H1 (cell line): ENCODE measurements at regions of chr18 and their contacts with region 1.

Region 1: DNA sequence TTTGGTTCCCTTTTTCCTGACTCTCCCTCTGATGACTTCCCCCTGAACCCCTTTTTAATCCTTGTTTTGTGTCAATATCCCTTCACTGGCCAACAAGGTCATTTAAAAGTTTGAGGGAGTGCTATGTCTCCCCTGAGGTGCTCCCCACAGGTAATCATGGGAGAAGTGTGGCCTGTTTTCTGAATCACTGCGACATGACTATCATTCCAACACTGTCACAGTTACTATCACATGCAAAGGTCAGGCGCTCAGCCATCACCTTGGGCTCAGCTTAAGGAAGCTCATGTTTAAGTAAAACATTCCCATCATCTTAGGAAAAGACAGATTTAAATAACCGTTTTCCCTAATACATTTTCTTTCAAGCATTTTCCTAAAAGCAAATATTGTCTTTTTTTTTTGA is 20.9 kb upstream of the ACAA2 start:
- DNase-seq: no peak
- H3K4me3 ChIP-seq: no peak overlapping the region
- H3K27ac ChIP-seq: no peak overlapping the region
- H3K4me1 ChIP-seq: no peaks in the 10 kb centered on the region
- H3K27me3 ChIP-seq: no peaks in the 10 kb centered on the region
- CTCF ChIP-seq: no peak
- EP300 ChIP-seq: no peak
- POLR2A ChIP-seq: no peak
- RAD21 ChIP-seq: no peak

Region 2: DNA sequence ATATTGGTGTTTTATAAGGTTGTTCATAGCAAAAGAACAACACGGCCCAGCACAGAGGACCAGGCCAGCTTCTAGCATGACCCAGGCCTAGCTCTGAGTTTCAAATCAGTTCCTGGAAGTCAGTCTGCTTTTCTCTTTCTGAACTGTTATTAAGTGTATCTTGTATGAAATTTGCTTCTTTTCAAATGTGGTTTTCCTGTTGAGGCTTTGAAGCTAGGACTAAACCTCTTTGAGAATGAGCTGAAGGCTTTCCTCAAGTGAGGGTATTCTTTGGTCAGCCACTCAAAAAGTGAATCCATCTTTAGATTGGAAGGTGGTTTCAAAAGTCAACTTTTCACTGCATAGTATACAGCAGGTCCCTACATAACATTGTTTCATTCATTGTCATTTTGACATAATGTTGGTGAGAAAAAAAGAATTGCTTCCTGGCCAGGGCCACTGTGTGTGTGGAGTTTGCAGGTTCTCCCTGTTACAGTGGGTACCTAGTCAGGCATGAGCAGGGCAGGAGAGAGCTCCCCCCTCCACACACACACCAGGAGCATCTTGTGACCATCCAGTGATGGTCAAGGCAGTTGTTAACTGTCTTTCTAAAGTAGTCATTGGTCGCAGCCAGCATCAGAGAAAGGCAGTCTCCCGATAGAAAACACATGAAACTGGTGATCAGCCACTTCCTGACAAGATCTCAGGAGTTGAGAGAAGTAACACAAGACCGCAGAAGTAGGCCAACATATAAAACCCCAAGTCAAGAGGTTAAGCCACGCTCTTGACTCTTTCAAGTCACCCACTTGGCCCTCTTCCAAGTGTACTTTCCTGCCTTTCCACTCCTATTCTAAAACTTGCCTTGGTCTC is 14.2 kb before region 1 on chr18:
- CTCF ChIA-PET with region 1: interaction called, 3 read pairs
- POLR2A ChIA-PET with region 1: interaction called, 10 read pairs
- DNase-seq: no peak
- H3K4me3 ChIP-seq: no peak overlapping the region
- H3K27ac ChIP-seq: no peak overlapping the region
- H3K4me1 ChIP-seq: no peaks in the 10 kb centered on the region
- H3K27me3 ChIP-seq: no peaks in the 10 kb centered on the region
- CTCF ChIP-seq: no peak
- EP300 ChIP-seq: no peak
- POLR2A ChIP-seq: no peak
- RAD21 ChIP-seq: no peak

Region 3: GRCh38 chr18:49878567-49879270 is 44.5 kb after region 1 on chr18:
- CTCF ChIA-PET with region 1: no interaction called
- POLR2A ChIA-PET with region 1: no interaction called
- DNase-seq: no peak
- H3K4me3 ChIP-seq: no peak overlapping the region
- H3K27ac ChIP-seq: no peak overlapping the region
- H3K4me1 ChIP-seq: no peaks in the 10 kb centered on the region
- H3K27me3 ChIP-seq: no peaks in the 10 kb centered on the region
- CTCF ChIP-seq: no peak
- EP300 ChIP-seq: no peak
- POLR2A ChIP-seq: no peak
- RAD21 ChIP-seq: no peak

Region 4: DNA sequence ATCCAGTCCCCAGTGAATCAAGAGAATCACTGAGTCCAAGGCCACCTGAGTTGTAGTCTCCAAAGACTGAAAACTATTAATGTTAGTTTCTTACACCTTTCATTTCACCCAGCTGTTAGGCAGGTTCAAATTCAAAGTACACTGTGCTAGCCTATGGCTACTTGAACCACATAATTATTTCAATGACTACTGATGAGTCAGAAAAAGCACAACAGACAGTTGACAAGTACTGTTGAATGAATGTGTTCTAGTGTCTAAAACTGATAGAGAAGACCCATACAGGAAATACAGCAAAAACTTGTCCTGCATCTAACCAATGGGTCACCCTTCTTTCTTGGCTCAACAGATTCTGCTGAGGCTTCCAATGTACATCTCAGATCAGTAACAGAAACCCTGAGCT is 199.8 kb after region 1 on chr18:
- CTCF ChIA-PET with region 1: no interaction called
- POLR2A ChIA-PET with region 1: no interaction called
- DNase-seq: no peak
- H3K4me3 ChIP-seq: no peak overlapping the region
- H3K27ac ChIP-seq: no peak overlapping the region
- H3K4me1 ChIP-seq: no peaks in the 10 kb centered on the region
- H3K27me3 ChIP-seq: no peaks in the 10 kb centered on the region
- CTCF ChIP-seq: no peak
- EP300 ChIP-seq: no peak
- POLR2A ChIP-seq: no peak
- RAD21 ChIP-seq: no peak